Activated B cell treated with CpG ODN at 0.5 μM for 24 hours (primary cell): ENCODE measurements at regions of chr10 and their contacts with region 1.

Region 1: DNA sequence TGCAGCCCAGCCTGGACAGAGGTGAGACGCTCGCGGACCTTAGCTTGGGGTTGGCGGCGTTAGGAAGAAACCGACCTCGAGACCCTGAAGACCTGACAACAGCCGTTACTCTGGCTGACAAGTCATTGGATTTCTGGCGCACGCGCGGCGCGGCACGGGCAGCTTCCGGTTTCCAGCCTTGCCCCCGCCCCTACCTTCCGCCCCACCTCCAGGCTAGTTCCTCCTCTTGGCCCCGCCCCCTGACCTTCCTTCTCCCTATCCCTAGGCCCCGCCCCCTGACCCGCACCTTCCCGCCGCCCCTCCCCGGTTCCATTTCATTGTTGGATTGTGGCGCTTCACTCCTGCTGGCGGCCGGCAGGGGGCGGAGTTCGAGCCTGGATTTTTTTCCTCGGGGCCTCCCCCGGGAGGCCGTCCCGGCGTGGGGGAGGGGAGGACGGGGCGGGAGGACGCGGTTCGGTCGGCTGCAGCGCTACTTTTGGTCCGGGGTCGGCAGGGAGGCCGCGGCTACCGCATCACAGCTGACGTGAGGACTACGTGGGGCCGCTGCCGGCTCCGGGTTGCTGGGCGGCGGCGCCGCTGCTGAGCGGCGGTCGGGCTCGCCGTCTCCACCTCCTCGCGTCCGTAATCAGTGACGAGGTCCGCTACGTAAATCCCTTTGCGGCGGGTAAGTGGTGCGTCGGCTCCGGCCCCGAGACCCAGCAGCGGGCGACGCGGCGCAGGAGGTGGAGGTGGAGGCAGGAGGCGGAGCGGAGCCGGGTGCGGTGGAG is at the start of gene CREM:
- DNase-seq: peak; percentile 96
- ATAC-seq: peak; percentile 85
- H3K4me3 Mint-ChIP-seq: peak within 1 kb of the TSS; percentile 93
- H3K27ac Mint-ChIP-seq: peak within 1 kb of the TSS; percentile 98
- H3K4me1 Mint-ChIP-seq: peaks cover 38% of the 10 kb centered on the region
- H3K27me3 Mint-ChIP-seq: no peaks in the 10 kb centered on the region
- CTCF ChIP-seq: peak; percentile 28
- total RNA-seq, gene CREM: 75.3 and 86.4 TPM in 2 replicates

Region 2: DNA sequence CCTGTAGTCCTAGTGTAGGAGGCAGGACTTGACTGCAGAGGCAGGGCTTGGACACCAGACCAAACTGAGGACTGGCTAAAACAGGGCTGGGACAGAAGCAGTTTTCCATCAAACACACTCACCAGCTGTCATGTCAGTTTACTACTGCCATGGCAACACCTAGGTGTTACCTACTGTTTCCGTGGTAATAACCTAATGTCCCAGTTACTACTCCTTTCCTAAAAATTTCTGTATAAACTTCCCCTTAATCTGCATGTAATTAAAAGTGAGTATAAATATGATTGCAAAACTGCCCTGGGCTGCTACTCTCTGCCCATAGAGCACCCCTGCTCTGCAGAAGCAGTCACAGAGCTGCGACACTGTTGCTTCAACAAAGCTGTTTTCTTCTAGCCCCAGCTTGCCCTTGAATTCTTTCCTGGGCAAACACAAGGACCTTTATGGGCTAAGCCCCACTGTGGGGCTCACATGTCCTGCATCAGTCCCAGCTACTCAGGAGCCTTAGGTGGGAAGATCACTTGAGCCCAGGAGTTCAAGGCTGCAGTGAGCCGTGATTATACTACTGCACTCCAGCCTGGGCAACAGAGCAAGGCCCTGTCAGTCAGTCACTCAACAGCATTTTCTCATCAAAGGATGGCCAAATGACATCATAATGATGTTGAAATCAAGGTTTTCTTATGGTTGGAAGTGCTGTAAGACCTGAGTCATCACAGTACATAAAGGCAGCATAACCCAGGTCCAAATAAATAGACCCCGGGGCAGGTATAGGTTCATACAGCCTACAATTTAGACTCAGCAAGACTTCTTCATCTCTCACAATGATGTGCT is 652.9 kb before region 1 on chr10:
- CTCF ChIA-PET with region 1: no interaction called
- POLR2A ChIA-PET with region 1: no interaction called
- intact Hi-C with region 1: no loop called
- DNase-seq: no peak
- ATAC-seq: no peak
- H3K4me3 Mint-ChIP-seq: no peak overlapping the region
- H3K27ac Mint-ChIP-seq: no peak overlapping the region
- H3K4me1 Mint-ChIP-seq: no peaks in the 10 kb centered on the region
- H3K27me3 Mint-ChIP-seq: no peaks in the 10 kb centered on the region
- CTCF ChIP-seq: no peak

Region 3: DNA sequence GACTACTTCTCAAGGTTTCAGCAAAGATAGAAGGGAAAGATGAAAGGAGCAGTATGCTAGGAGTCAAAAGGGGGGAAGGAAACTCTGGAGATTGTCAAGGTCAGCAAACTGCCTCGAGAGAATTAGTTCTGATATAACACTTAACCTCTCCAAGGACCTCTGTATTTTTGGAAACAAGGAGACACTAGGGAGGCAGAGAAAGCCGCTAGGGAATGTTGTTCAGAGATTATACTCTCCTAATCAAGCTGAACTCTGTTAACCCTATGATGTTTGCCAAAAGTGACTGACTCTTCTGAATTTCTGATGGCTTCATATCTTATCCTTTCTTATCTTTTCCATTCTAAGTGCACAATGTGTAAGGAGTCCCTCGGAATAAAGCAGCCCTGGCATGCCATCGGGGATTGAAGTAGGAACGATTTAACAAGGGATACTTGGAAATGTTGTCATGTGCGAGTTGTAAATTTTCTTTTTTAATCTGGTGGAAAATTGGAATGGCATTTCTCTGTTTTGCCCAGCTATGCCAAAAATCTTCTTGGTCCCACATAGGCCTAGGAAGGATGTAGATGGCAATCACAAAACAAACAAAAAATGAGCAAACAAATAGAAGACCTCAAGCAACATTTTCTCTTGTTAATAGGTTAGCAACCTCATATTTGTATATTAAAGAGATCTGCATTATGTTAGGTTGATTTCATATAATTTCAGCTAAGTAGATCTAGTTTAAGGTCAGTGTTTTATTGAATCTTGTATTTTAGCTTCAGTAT is 27.2 kb after region 1 on chr10:
- CTCF ChIA-PET with region 1: interaction called, 18 read pairs
- POLR2A ChIA-PET with region 1: interaction called, 174 read pairs
- intact Hi-C with region 1: loop called (anchors 1 kb)
- DNase-seq: no peak
- ATAC-seq: no peak
- H3K4me3 Mint-ChIP-seq: no peak overlapping the region
- H3K27ac Mint-ChIP-seq: no peak overlapping the region
- H3K4me1 Mint-ChIP-seq: peaks cover 34% of the 10 kb centered on the region
- H3K27me3 Mint-ChIP-seq: no peaks in the 10 kb centered on the region
- CTCF ChIP-seq: no peak

Region 4: DNA sequence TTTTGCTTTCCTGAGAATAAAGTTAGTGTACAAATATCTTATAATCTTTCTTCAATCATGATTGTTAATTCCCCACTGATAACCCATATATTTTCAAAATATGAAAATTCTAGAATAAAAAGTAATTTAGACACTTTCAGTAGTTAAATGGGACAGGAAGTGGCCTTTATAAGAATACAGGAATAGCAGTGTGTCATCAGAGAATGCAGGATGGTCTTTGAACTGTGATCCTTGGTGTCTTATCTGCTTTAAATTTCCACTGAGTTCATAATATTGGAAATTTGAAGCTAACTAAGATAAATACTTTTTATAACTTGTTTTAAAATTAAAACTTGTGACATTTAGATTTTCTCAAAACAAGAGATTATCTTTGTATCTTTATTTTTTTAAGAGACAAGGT is 75.3 kb after region 1 on chr10:
- CTCF ChIA-PET with region 1: interaction called, 5 read pairs
- POLR2A ChIA-PET with region 1: interaction called, 570 read pairs
- intact Hi-C with region 1: no loop called
- DNase-seq: no peak
- ATAC-seq: no peak
- H3K4me3 Mint-ChIP-seq: no peak overlapping the region
- H3K27ac Mint-ChIP-seq: no peak overlapping the region
- H3K4me1 Mint-ChIP-seq: peaks cover 13% of the 10 kb centered on the region
- H3K27me3 Mint-ChIP-seq: no peaks in the 10 kb centered on the region
- CTCF ChIP-seq: no peak

Region 5: DNA sequence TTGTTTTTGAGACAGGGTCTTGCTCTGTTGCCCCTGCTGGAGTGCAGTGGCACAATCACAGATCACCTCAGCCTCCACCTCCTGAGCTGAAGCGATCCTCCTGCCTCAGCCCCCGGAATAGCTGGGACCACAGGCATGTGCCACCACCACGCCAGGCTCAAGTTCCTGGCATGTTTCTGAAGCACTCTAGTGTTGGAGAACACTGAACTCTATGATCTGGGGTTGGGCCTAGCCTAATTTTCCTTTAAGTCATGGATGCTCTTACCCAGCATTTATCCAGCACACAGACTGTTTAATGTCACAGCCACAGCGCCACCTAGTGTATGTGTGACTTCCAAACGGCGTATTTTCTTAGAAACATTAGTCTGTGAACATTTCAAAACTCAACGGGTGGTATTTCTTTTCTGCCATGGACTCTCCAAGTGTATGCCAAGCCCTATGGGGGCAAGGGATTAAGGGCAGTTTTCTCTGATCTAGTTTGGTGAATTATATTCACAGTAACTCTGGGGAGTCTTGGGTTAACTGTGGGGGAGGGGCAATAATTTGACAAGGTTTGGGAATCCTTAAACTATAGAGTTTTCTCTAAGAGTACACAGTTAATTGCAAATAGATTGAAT is 91.7 kb after region 1 on chr10:
- CTCF ChIA-PET with region 1: interaction called, 198 read pairs
- POLR2A ChIA-PET with region 1: interaction called, 77 read pairs
- intact Hi-C with region 1: loop called (anchors 1 kb)
- DNase-seq: peak; percentile 44
- ATAC-seq: peak; percentile 82
- H3K4me3 Mint-ChIP-seq: no peak overlapping the region
- H3K27ac Mint-ChIP-seq: no peak overlapping the region
- H3K4me1 Mint-ChIP-seq: peaks cover 12% of the 10 kb centered on the region
- H3K27me3 Mint-ChIP-seq: peaks cover 9% of the 10 kb centered on the region
- CTCF ChIP-seq: no peak

Region 6: DNA sequence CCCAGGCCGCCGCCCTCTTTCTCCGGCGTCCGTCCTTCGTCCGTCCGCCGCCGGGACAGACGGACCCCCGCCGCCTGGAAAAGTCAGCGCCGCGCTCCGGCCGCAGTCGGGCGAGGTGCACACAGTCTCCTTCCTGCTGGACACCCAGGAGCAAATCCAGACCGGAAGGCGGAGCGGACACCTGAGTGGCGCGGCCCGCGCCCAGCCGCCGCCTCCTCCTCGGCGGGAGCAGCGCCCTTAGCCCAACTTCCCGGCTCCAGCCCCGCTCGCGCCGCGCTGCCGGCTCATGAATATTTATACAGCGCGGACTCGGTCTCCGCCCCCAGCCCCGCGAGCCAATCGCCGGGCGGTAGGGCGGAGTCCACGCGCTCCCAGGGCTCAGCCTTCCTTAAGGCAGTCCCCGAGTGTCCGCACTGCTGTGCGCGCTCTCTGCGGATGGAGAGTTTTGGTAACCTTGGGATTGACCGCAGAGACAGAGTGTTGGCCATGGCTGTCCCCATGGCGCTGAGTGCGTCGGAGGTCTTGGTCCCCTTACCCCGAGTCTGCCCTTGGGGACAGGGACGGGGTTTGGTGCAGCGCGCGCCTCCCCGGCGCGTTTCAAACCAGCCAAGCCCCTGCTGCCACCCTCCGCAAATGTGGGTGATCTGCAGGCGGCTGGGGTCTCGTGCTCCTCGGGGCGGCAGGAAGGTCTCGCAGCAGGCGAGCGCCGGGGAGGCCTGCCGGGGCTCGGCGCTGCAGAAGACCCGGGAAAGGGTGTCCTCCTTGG is 515.5 kb after region 1 on chr10 and contains the start of gene FZD8:
- CTCF ChIA-PET with region 1: no interaction called
- POLR2A ChIA-PET with region 1: no interaction called
- intact Hi-C with region 1: loop called (anchors 1 kb)
- DNase-seq: peak; percentile 69
- ATAC-seq: peak; percentile 87
- H3K4me3 Mint-ChIP-seq: peak within 1 kb of the TSS; percentile 88
- H3K27ac Mint-ChIP-seq: no peak within 1 kb of the TSS
- H3K4me1 Mint-ChIP-seq: peaks cover 30% of the 10 kb centered on the region
- H3K27me3 Mint-ChIP-seq: peaks cover 33% of the 10 kb centered on the region
- CTCF ChIP-seq: no peak
- total RNA-seq, gene FZD8: 0.17 and 0.22 TPM in 2 replicates

Region 7: DNA sequence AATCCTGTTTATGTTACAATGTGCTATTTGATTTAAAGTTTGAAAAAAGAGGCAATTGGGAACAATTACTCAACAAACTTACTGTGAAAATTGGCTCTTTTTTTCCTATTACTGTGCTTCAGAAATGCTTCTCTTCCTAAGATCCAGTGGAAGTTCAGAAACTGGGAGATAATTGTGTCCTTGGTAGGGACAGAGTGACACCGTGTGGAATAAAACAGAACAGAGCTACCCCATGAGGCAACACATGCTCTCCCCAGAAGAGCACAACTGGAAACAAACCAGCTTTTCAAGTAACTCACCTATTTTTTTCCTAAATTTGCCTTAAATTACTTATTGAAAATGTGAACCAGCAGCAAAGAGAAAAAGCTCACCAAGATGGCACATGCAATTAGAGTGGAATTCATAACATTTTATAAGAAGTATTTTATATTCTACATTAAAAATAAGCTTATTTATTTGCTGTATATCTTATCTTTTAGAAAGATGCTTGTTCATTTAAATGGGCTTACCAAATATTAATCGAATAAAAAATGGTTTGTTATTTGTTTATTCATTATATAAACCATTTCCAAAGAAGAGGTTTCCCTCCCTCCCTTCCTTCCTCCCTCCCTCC is 1652.6 kb after region 1 on chr10:
- CTCF ChIA-PET with region 1: no interaction called
- POLR2A ChIA-PET with region 1: no interaction called
- intact Hi-C with region 1: loop called (anchors 5 kb)
- DNase-seq: no peak
- ATAC-seq: no peak
- H3K4me3 Mint-ChIP-seq: no peak overlapping the region
- H3K27ac Mint-ChIP-seq: no peak overlapping the region
- H3K4me1 Mint-ChIP-seq: no peaks in the 10 kb centered on the region
- H3K27me3 Mint-ChIP-seq: peaks cover 1% of the 10 kb centered on the region
- CTCF ChIP-seq: no peak